ENCODE measurements at regions of chr20 and their contacts with region 1.

Region 1: GRCh38 chr20:52312132-52312729 is 120.7 kb upstream of the ZFP64 start:
- DNase-seq: peak in 8 of 9 donors; percentile 35 to 76 (median 70)
- ATAC-seq: peak; percentile 85
- H3K4me3 ChIP-seq: no peak overlapping the region
- H3K4me3 Mint-ChIP-seq: peak overlapping the region in 2 of 10 donors; percentile 32 to 41
- H3K27ac ChIP-seq: no peak overlapping the region
- H3K27ac Mint-ChIP-seq: peak overlapping the region in 4 of 9 donors; percentile 21 to 57 (median 38)
- H3K4me1 ChIP-seq: peaks cover 0 to 8% of the 10 kb centered on the region in 2 donors
- H3K4me1 Mint-ChIP-seq: peaks cover 7 to 57% (median 40%) of the 10 kb centered on the region in 7 donors
- H3K27me3 ChIP-seq: no peaks in the 10 kb centered on the region
- H3K27me3 Mint-ChIP-seq: peaks cover 0 to 7% (median 0%) of the 10 kb centered on the region in 5 donors

Region 2: DNA sequence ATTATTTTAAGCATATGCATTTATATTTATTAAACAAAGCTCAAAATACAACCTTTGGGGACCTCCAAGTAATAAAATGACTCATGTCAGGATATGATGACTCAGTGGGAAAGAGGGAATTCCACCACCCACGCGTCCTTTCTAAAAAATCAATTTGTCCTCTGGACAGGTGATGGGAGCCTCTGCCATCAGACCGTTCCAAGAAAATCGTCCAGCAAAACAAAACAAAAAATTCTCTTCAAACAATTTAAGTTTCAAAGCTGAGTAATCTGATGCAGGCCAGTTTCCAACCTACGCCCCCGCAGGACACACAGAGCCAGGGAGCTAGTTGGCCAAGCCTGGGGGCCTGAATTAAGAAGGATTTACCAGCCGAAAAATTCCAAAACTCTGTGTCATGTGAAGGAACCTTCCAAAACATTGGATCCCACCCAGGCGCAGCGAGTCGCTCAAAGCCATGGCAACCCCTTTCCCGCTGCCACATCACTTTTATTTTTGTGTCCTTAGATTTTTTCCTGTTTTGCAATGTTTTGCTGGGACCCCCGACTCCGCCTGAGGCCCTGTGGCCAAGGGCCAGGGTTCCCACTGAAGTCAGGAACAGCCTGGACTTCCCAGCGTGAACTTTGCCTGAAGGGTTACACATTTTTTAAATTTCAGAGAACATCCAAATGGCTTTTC is 865.0 kb before region 1 on chr20:
- CTCF ChIA-PET with region 1: no interaction called
- POLR2A ChIA-PET with region 1: no interaction called
- intact Hi-C with region 1: no loop called
- DNase-seq: no peak
- ATAC-seq: no peak
- H3K4me3 ChIP-seq: no peak overlapping the region
- H3K4me3 Mint-ChIP-seq: no peak overlapping the region
- H3K27ac ChIP-seq: no peak overlapping the region
- H3K27ac Mint-ChIP-seq: no peak overlapping the region
- H3K4me1 ChIP-seq: peaks cover 0 to 5% of the 10 kb centered on the region in 2 donors
- H3K4me1 Mint-ChIP-seq: peaks cover 2 to 37% (median 12%) of the 10 kb centered on the region in 7 donors
- H3K27me3 ChIP-seq: no peaks in the 10 kb centered on the region
- H3K27me3 Mint-ChIP-seq: no peaks in the 10 kb centered on the region

Region 3: DNA sequence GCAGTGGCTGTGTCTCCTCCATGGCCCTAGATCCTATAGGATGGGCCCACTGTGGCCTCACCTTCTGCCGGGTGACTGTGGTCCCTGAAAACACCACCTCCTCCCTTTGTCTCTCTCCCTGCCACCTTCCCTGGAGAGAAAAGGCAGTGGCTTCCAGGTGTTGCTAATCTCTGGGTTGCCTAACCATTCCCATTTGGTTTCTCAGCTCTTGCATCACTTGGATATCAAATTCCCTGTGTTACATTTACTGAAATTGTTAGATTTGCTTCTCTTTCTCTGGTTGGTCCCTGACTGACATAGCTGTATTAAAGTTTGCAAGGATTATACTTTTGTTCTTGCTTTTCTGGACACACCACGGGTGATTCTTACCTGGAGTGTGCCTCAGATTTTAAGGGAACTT is 111.4 kb before region 1 on chr20:
- CTCF ChIA-PET with region 1: no interaction called
- POLR2A ChIA-PET with region 1: no interaction called
- intact Hi-C with region 1: no loop called
- DNase-seq: no peak
- ATAC-seq: no peak
- H3K4me3 ChIP-seq: no peak overlapping the region
- H3K4me3 Mint-ChIP-seq: no peak overlapping the region
- H3K27ac ChIP-seq: no peak overlapping the region
- H3K27ac Mint-ChIP-seq: no peak overlapping the region
- H3K4me1 ChIP-seq: no peaks in the 10 kb centered on the region
- H3K4me1 Mint-ChIP-seq: no peaks in the 10 kb centered on the region
- H3K27me3 ChIP-seq: no peaks in the 10 kb centered on the region
- H3K27me3 Mint-ChIP-seq: peaks cover 0 to 4% (median 0%) of the 10 kb centered on the region in 5 donors

Region 4: DNA sequence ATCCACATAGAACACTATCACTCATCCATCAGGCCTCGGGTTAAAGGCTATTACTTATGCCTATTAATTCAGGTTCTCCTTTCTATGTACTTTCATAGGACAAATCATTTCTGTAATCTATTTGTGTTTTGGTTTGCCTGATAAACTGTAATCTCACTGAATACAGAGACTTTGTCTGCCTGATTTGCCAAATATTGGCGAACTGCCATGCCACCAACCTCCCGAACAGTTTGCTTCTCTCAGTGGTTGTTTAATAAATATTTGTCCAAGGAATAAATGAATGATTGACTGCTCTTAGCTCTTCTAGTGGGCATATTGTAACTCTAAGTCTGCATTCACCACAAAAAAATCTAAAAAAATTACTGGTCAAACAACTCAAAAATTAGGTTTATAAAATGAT is 49.4 kb after region 1 on chr20:
- CTCF ChIA-PET with region 1: no interaction called
- POLR2A ChIA-PET with region 1: no interaction called
- intact Hi-C with region 1: no loop called
- DNase-seq: no peak
- ATAC-seq: no peak
- H3K4me3 ChIP-seq: no peak overlapping the region
- H3K4me3 Mint-ChIP-seq: no peak overlapping the region
- H3K27ac ChIP-seq: no peak overlapping the region
- H3K27ac Mint-ChIP-seq: no peak overlapping the region
- H3K4me1 ChIP-seq: no peaks in the 10 kb centered on the region
- H3K4me1 Mint-ChIP-seq: peaks cover 0 to 15% (median 12%) of the 10 kb centered on the region in 7 donors
- H3K27me3 ChIP-seq: no peaks in the 10 kb centered on the region
- H3K27me3 Mint-ChIP-seq: peaks cover 0 to 17% (median 0%) of the 10 kb centered on the region in 5 donors

Region 5: GRCh38 chr20:52410182-52410647 is 98.0 kb after region 1 on chr20:
- CTCF ChIA-PET with region 1: interaction called, 12 read pairs
- POLR2A ChIA-PET with region 1: interaction called, 19 read pairs
- intact Hi-C with region 1: loop called in 1 of 2 experiments (anchors 1 kb)
- DNase-seq: peak in 8 of 9 donors; percentile 18 to 93 (median 87)
- ATAC-seq: peak; percentile 94
- H3K4me3 ChIP-seq: peak overlapping the region; percentile 30
- H3K4me3 Mint-ChIP-seq: peak overlapping the region; percentile 63 to 87 (median 82)
- H3K27ac ChIP-seq: peak overlapping the region; percentile 94
- H3K27ac Mint-ChIP-seq: peak overlapping the region; percentile 94 to 100 (median 99)
- H3K4me1 ChIP-seq: peaks cover 68 to 73% of the 10 kb centered on the region in 2 donors
- H3K4me1 Mint-ChIP-seq: peaks cover 34 to 88% (median 76%) of the 10 kb centered on the region in 7 donors
- H3K27me3 ChIP-seq: no peaks in the 10 kb centered on the region
- H3K27me3 Mint-ChIP-seq: no peaks in the 10 kb centered on the region

Region 6: GRCh38 chr20:52593634-52594033 is 281.4 kb after region 1 on chr20:
- CTCF ChIA-PET with region 1: no interaction called
- POLR2A ChIA-PET with region 1: no interaction called
- intact Hi-C with region 1: no loop called
- DNase-seq: no peak
- ATAC-seq: no peak
- H3K4me3 ChIP-seq: no peak overlapping the region
- H3K4me3 Mint-ChIP-seq: no peak overlapping the region
- H3K27ac ChIP-seq: no peak overlapping the region
- H3K27ac Mint-ChIP-seq: no peak overlapping the region
- H3K4me1 ChIP-seq: no peaks in the 10 kb centered on the region
- H3K4me1 Mint-ChIP-seq: no peaks in the 10 kb centered on the region
- H3K27me3 ChIP-seq: no peaks in the 10 kb centered on the region
- H3K27me3 Mint-ChIP-seq: peaks cover 0 to 4% (median 0%) of the 10 kb centered on the region in 5 donors

Region 7: GRCh38 chr20:52799130-52799529 is 486.9 kb after region 1 on chr20:
- CTCF ChIA-PET with region 1: no interaction called
- POLR2A ChIA-PET with region 1: no interaction called
- intact Hi-C with region 1: loop called in 1 of 2 experiments (anchors 10 kb)
- DNase-seq: no peak
- ATAC-seq: no peak
- H3K4me3 ChIP-seq: no peak overlapping the region
- H3K4me3 Mint-ChIP-seq: no peak overlapping the region
- H3K27ac ChIP-seq: no peak overlapping the region
- H3K27ac Mint-ChIP-seq: no peak overlapping the region
- H3K4me1 ChIP-seq: no peaks in the 10 kb centered on the region
- H3K4me1 Mint-ChIP-seq: peaks cover 0 to 4% (median 0%) of the 10 kb centered on the region in 7 donors
- H3K27me3 ChIP-seq: no peaks in the 10 kb centered on the region
- H3K27me3 Mint-ChIP-seq: peaks cover 0 to 3% (median 0%) of the 10 kb centered on the region in 5 donors

Region 8: GRCh38 chr20:53001498-53002301 is 689.5 kb after region 1 on chr20:
- CTCF ChIA-PET with region 1: interaction called, 3 read pairs
- POLR2A ChIA-PET with region 1: interaction called, 8 read pairs
- intact Hi-C with region 1: loop called in 1 of 2 experiments (anchors 1 kb)
- DNase-seq: peak in 7 of 9 donors; percentile 49 to 79 (median 71)
- ATAC-seq: peak; percentile 82
- H3K4me3 ChIP-seq: peak overlapping the region; percentile 32
- H3K4me3 Mint-ChIP-seq: peak overlapping the region; percentile 73 to 94 (median 84)
- H3K27ac ChIP-seq: peak overlapping the region; percentile 88
- H3K27ac Mint-ChIP-seq: peak overlapping the region in 7 of 9 donors; percentile 89 to 99 (median 97)
- H3K4me1 ChIP-seq: peaks cover 0 to 64% of the 10 kb centered on the region in 2 donors
- H3K4me1 Mint-ChIP-seq: peaks cover 27 to 97% (median 87%) of the 10 kb centered on the region in 7 donors
- H3K27me3 ChIP-seq: no peaks in the 10 kb centered on the region
- H3K27me3 Mint-ChIP-seq: no peaks in the 10 kb centered on the region

Region 9: GRCh38 chr20:53547664-53548239 is 1235.5 kb after region 1 on chr20:
- CTCF ChIA-PET with region 1: interaction called, 19 read pairs
- POLR2A ChIA-PET with region 1: interaction called, 3 read pairs
- intact Hi-C with region 1: loop called (anchors 1 kb)
- DNase-seq: peak in 8 of 9 donors; percentile 27 to 61 (median 50)
- ATAC-seq: peak; percentile 54
- H3K4me3 ChIP-seq: no peak overlapping the region
- H3K4me3 Mint-ChIP-seq: no peak overlapping the region
- H3K27ac ChIP-seq: no peak overlapping the region
- H3K27ac Mint-ChIP-seq: no peak overlapping the region
- H3K4me1 ChIP-seq: no peaks in the 10 kb centered on the region
- H3K4me1 Mint-ChIP-seq: peaks cover 0 to 6% (median 5%) of the 10 kb centered on the region in 7 donors
- H3K27me3 ChIP-seq: no peaks in the 10 kb centered on the region
- H3K27me3 Mint-ChIP-seq: no peaks in the 10 kb centered on the region

Measured in naive thymus-derived CD4-positive, alpha-beta T cell (primary cell).